PC-3 (cell line): ENCODE measurements at regions of chr15 and their contacts with region 1.

Region 1: DNA sequence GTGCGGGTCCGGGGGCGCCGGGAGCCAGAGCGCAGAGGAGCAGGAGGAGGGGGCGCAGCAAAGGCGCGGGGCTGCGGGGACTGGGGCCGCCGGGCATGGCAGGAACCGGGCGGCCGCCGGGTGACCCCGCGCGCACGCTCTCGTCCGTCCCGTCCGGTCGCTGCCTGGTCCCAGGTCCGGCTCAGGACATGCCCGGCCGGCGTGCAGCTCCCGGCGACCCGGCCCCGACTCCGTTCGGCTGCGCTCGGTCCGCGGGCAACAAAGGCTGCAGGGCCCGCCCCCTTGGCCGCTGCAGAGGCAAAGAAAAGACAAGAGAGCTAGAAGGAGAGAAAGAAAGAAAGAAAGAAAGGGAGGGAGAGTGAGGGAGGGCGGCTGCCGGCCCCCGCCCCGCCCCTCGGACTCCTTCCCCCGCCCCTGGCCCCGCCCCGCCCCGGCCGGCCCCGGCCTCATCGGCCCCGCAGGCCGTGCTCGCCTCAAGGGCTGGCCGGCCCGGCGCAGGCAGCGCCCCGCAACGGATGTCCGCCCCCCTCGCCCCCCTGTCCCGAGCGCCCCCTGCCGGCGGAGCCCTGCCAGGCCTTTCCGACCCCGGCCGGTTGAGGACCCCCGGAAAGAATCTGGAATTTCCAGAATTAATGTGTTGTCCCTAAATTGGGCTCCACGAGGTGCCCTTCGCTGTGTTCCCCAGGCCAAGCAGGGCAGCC is at the start of gene ADAMTS7:
- DNase-seq: peak; percentile 66
- ATAC-seq: peak; percentile 77
- H3K4me3 ChIP-seq: peak within 1 kb of the TSS; percentile 74
- H3K27ac ChIP-seq: no peak within 1 kb of the TSS
- H3K4me1 ChIP-seq: 0 out of 2 replicates have a peak, but pooled peaks cover 4% of the 10 kb centered on the region
- H3K27me3 ChIP-seq: no peaks in the 10 kb centered on the region
- CTCF ChIP-seq: peak; percentile 64
- total RNA-seq, gene ADAMTS7: 4.2 and 5.2 TPM in 2 replicates

Region 2: DNA sequence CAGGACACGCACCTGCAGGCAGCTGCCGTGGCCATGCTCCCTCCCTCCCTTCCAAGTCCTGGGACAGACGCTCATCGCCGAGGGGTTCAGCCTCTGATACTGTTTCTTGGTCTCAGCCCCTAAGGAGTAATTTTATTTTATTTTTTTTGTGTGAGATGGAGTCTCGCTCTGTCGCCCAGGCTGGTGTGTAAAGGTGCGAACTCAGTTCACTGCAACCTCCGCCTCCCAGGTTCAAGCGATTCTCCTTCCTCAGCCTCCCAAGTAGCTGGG is 53.7 kb before region 1 on chr15:
- CTCF ChIA-PET with region 1: no interaction called
- POLR2A ChIA-PET with region 1: no interaction called
- intact Hi-C with region 1: loop called (anchors 2 kb)
- DNase-seq: no peak
- ATAC-seq: no peak
- H3K4me3 ChIP-seq: no peak overlapping the region
- H3K27ac ChIP-seq: peak overlapping the region; percentile 95
- H3K4me1 ChIP-seq: peaks cover 20% of the 10 kb centered on the region
- H3K27me3 ChIP-seq: no peaks in the 10 kb centered on the region
- CTCF ChIP-seq: no peak

Region 3: GRCh38 chr15:78859971-78860732 is 48.9 kb after region 1 on chr15:
- CTCF ChIA-PET with region 1: no interaction called
- POLR2A ChIA-PET with region 1: no interaction called
- intact Hi-C with region 1: loop called (anchors 1 kb)
- DNase-seq: peak; percentile 90
- ATAC-seq: peak; percentile 89
- H3K4me3 ChIP-seq: peak overlapping the region; percentile 78
- H3K27ac ChIP-seq: peak overlapping the region; percentile 48
- H3K4me1 ChIP-seq: no peaks in the 10 kb centered on the region
- H3K27me3 ChIP-seq: no peaks in the 10 kb centered on the region
- CTCF ChIP-seq: peak; percentile 56

Region 4: GRCh38 chr15:78872972-78873792 is 61.9 kb after region 1 on chr15:
- CTCF ChIA-PET with region 1: no interaction called
- POLR2A ChIA-PET with region 1: interaction called, 20 read pairs
- intact Hi-C with region 1: no loop called
- DNase-seq: peak; percentile 82
- ATAC-seq: peak; percentile 66
- H3K4me3 ChIP-seq: peak overlapping the region; percentile 76
- H3K27ac ChIP-seq: peak overlapping the region; percentile 98
- H3K4me1 ChIP-seq: peaks cover 26% of the 10 kb centered on the region
- H3K27me3 ChIP-seq: no peaks in the 10 kb centered on the region
- CTCF ChIP-seq: peak; percentile 47; the same call in 1 of the 2 replicates